K562 (cell line): ENCODE measurements at regions of chr2 and their contacts with region 1.

Region 1: DNA sequence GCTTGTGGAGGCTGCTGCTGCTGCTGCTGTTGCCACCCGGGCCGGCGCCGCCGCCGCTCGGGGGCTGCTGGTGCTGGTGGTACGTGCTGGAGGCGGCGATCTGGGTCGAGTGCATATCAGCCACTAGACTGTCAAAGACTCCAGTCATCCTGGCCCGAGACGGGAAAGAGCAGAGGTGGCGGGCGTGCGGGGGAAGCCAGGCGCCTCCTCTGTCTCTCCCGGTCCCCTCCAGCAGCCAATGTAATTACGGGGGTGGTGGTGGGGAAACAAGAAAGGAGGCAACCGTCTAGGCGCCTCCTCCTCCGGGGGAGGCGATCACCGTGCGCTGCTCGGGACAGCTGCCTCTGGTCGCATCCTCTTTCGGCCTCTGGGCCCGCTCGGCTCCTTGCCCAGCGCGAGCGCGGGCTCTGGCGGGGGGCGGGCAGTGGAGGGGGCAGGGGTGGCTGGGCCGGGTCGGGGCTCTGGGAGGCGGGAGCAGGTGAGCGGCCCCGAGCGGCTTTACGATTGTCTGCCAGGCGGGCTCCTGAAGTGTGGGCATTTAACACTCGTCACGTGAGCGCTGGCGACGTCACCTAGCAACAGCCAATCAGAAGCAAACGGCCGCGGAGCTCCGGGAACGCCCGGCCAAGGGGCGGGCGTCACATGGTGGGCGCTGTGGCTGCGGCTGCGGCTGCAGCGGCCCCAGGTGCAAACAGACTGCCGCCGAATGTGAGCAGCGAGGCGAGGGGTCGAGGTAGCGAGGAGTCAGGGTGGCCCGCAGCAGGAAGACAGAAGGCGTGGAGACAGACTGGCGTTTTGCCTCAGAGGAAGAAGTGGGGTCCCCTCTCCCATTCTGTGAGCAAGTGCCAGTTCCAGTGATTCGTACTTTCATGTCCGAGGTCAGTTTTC is at the start of gene DLX2:
- DNase-seq: peak; percentile 96 to 97 (median 96)
- ATAC-seq: peak; percentile 80
- H3K4me3 ChIP-seq: peak within 1 kb of the TSS; percentile 63
- H3K27ac ChIP-seq: peak within 1 kb of the TSS; percentile 59
- H3K4me1 ChIP-seq: peaks cover 21 to 69% of the 10 kb centered on the region in 2 experiments
- H3K27me3 ChIP-seq: no peaks in the 10 kb centered on the region; a peak in 1 of 5 replicates
- CTCF ChIP-seq: peak in 2 of 3 experiments; percentile 23 to 32; a peak in 3 of 6 replicates
- EP300 ChIP-seq: no peak
- POLR2A ChIP-seq: peak; percentile 66
- RAD21 ChIP-seq: peak in 1 of 2 experiments; percentile 50; a peak in 2 of 4 replicates
- polyA plus RNA-seq, gene DLX2: 0.49 to 2.1 TPM

Region 2: DNA sequence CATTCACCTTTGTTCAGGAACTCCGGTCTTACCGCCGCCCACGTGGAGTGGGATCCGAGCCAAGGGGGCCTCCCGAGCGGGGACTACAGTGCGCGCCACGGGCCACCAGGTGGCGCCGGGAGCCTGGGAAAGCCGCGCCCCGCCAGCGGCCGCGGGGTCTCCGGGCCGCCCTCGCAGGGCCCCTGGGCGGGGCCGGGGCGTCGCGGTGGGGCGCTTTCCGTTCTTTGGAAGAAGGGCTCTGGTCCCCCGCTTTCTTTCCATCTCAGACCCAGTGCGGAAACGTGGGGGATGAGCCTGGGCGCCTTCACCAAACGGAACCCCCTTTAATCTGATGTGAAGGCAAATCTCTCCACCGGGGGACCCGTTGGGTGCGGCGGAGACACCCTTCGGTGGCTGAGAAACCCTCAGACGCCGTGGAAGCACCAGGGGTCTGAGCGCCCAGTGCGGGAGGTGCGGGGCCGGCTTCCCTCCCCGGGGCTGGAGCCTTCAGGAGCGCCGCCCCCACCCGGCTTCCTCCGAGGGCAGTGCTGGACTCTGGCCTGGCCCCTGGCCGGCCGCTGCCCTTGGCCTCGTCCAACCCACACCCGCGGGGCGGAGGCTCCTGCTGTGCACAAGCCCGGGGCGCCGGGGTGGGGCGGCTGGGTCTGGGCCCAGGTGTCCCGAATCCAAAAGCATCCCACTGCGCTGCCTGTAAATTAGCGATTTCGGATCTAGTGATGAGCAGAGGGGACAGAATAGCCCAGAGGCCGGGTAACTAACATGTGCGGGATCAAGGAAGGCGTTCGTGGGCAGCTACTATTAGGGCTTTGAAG is 1128.9 kb before region 1 on chr2:
- CTCF ChIA-PET with region 1: no interaction called
- POLR2A ChIA-PET with region 1: no interaction called
- in situ Hi-C with region 1: loop called (anchors 25 kb)
- intact Hi-C with region 1: no loop called
- DNase-seq: peak; percentile 96 to 99 (median 98)
- ATAC-seq: peak; percentile 92
- H3K4me3 ChIP-seq: peak overlapping the region; percentile 56
- H3K27ac ChIP-seq: peak overlapping the region; percentile 73
- H3K4me1 ChIP-seq: peaks cover 12 to 20% of the 10 kb centered on the region in 2 experiments; a peak in 4 of 5 replicates
- H3K27me3 ChIP-seq: no peaks in the 10 kb centered on the region
- CTCF ChIP-seq: peak; percentile 91 to 96 (median 93)
- EP300 ChIP-seq: peak; percentile 56
- POLR2A ChIP-seq: peak; percentile 77
- RAD21 ChIP-seq: peak; percentile 99 to 100

Region 3: DNA sequence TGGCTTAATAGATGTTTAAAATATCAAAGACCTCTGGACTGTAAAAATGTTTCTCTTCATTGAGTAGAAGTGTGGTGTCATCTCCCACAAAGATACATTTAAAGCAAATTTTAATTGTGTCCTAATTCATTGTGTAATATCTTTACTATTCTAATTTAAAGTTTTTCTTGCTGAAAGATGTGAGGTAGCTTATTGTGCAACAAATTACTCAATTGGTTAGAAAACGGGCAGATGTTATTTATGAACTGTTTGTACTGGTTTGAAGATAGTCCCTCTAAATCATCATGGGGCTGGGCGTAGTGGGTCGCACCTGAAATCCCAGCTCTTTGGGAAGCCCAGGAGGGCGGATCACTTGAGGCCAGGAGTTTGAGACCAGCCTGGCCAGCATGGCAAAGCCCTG is 515.1 kb before region 1 on chr2:
- CTCF ChIA-PET with region 1: no interaction called
- POLR2A ChIA-PET with region 1: no interaction called
- in situ Hi-C with region 1: loop called (anchors 5 kb)
- intact Hi-C with region 1: no loop called
- DNase-seq: no peak
- ATAC-seq: no peak
- H3K4me3 ChIP-seq: no peak overlapping the region
- H3K27ac ChIP-seq: no peak overlapping the region
- H3K4me1 ChIP-seq: no peaks in the 10 kb centered on the region
- H3K27me3 ChIP-seq: peaks cover 5 to 10% of the 10 kb centered on the region in 2 experiments; a peak in 4 of 5 replicates
- CTCF ChIP-seq: no peak
- EP300 ChIP-seq: no peak
- POLR2A ChIP-seq: no peak
- RAD21 ChIP-seq: no peak

Region 4: DNA sequence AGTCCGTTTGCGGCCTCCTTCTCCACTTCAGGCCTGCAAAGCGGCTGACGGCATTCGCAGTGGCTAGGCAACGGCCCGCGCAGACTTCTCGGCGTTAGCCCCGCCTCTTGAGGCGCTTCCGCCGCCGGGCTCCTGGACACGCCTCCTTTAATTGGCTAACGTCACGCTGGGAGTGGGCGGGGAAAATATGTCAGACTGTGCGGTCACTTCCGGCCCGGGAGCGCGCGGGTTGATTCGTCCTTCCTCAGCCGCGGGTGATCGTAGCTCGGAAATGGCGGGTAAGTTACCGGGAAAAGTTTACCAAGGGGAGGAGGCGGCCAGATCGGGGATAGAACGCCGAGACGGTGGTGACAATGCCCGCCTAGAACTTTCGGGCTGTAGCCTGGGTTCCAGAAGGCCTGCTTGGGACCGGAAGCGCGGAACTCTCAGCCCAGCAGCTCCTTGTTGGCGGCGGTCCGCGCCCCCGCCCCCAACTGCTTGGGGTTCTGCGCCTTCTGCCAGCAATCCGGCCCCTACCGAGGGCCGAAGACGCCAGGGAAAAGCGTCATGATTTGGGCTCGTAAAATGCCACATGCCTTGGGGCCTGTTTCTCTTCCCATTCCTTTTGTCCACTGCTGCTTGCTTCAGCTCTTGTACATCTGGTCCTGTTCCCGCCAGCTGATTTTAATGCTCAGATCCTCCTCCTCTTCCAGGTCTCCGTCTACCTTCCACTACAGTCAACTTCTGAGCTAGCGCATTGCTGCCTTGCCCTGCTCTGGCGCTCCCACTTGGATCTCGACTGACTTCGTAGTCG is 180.2 kb before region 1 on chr2 and contains the start of gene HAT1:
- CTCF ChIA-PET with region 1: no interaction called
- POLR2A ChIA-PET with region 1: interaction called, 4 read pairs
- in situ Hi-C with region 1: no loop called
- intact Hi-C with region 1: loop called (anchors 10 kb)
- DNase-seq: peak; percentile 98 to 99 (median 98)
- ATAC-seq: peak; percentile 94
- H3K4me3 ChIP-seq: peak within 1 kb of the TSS; percentile 68
- H3K27ac ChIP-seq: peak within 1 kb of the TSS; percentile 97
- H3K4me1 ChIP-seq: peaks cover 13 to 14% of the 10 kb centered on the region in 2 experiments; a peak in 4 of 5 replicates
- H3K27me3 ChIP-seq: no peaks in the 10 kb centered on the region
- CTCF ChIP-seq: 0 out of 6 replicates have a peak, but pooled peaks of 2 of the 3 experiments have one; percentile 3 to 10
- EP300 ChIP-seq: 0 out of 2 replicates have a peak, but pooled peaks have one; percentile 18
- POLR2A ChIP-seq: peak; percentile 93
- RAD21 ChIP-seq: no peak
- polyA plus RNA-seq, gene HAT1: 369 to 384 TPM

Region 5: GRCh38 chr2:171999604-172000469 is 102.8 kb before region 1 on chr2 and contains the start of gene METAP1D:
- CTCF ChIA-PET with region 1: no interaction called
- POLR2A ChIA-PET with region 1: interaction called, 3 read pairs
- in situ Hi-C with region 1: no loop called
- intact Hi-C with region 1: loop called (anchors 1 kb)
- DNase-seq: peak; percentile 98 to 99 (median 98)
- ATAC-seq: peak; percentile 98
- H3K4me3 ChIP-seq: peak within 1 kb of the TSS; percentile 56
- H3K27ac ChIP-seq: peak within 1 kb of the TSS; percentile 93
- H3K4me1 ChIP-seq: peaks cover 6 to 13% of the 10 kb centered on the region in 2 experiments; a peak in 4 of 5 replicates
- H3K27me3 ChIP-seq: no peaks in the 10 kb centered on the region
- CTCF ChIP-seq: peak in 1 of 3 experiments; percentile 2; a peak in 2 of 6 replicates
- EP300 ChIP-seq: no peak
- POLR2A ChIP-seq: peak; percentile 94
- RAD21 ChIP-seq: peak; percentile 38 to 50; a peak in 3 of 4 replicates
- polyA plus RNA-seq, gene METAP1D: 8.0 to 10.4 TPM